ENCODE measurements at regions of chr6 and their contacts with region 1.

Region 1: DNA sequence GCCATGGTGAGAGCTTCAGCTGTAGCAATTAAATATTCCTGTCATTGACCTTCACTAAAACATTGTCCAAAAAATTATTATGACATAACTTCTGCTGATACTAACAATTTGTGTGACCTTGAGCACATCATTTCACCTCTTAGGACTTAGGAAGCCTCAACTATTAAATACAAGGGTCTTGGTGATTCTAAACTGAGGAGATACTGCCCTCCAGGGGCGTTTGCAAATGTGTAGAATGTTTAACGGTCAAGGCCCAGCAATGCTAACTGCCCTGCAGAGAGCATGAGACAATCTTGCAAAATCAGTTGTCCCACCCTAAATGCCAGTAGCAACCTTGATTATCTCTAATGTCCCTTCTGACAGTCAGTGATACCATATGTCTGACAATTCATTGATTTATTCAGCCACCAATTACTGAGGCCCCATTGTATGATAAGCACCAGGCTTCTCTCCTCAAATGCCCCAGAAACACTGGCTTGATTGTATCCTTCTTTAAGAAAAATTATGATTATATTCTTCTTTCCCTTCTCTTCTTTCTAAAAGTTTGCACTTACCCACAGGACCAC is 284.1 kb upstream of the PLN start:
- DNase-seq: no peak
- CTCF ChIP-seq: peak; percentile 35

Region 2: GRCh38 chr6:118280210-118280609 is 16.2 kb after region 1 on chr6:
- CTCF ChIA-PET with region 1: interaction called, 11 read pairs
- POLR2A ChIA-PET with region 1: no interaction called
- DNase-seq: peak; percentile 55
- CTCF ChIP-seq: no peak

Region 3: GRCh38 chr6:118292558-118292957 is 28.6 kb after region 1 on chr6:
- CTCF ChIA-PET with region 1: no interaction called
- POLR2A ChIA-PET with region 1: no interaction called
- DNase-seq: no peak
- CTCF ChIP-seq: no peak

Region 4: DNA sequence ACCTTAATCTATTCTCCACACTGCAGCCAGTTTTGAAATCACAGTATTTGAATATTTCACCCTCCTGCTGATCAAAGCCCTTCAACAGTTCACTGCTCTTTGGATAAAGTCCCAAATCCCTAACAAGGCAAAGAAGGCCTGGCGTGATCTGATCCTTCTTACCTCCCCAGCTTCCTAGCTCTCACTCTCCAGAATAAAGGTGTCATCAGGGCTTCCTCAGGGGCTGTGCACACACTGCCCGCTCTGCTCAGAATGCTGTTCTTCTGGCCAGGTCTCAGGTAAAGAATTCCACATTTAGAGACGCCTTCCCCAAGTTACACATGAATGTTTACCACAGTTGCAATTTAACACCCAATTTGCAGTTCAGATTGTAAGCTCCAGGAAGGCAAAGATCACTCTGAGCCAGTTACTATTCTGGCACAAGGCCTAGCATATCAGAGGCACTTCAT is 729.8 kb after region 1 on chr6:
- CTCF ChIA-PET with region 1: no interaction called
- POLR2A ChIA-PET with region 1: no interaction called
- DNase-seq: no peak
- CTCF ChIP-seq: no peak